Head of caudate nucleus (tissue), 42 donors: ENCODE measurements at regions of chr11 and their contacts with region 1.

Region 1: DNA sequence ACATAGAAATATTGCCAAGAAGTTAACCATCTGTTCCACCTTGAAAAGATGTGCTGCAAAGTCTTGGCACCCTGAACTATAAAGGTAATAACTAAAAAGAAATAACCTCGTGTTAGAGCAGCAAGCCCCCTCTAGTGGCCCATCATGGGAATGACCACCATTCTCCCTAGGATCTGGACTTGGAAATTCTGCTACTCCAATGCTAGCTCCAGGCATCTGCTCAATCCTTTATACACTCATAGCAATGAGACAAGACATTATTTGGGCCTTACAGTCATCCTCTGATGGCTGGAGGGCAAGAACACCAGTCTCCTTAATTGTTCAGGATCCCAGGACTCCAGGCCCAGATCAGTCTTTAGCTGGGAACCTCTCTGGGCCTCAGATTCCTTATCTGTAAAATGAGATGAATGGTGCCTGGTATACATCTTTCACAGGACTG is 76.0 kb downstream of the CWC15 start:
- DNase-seq: peak; percentile 17 to 84 (median 66)

Region 2: GRCh38 chr11:94638902-94639373 is 258.4 kb before region 1 on chr11:
- intact Hi-C with region 1: no loop called
- DNase-seq: peak in 5 of 42 donors; percentile 2 to 38 (median 8)

Region 3: GRCh38 chr11:94786264-94787126 is 110.9 kb before region 1 on chr11:
- intact Hi-C with region 1: loop called (anchors 10 kb)
- DNase-seq: peak in 2 of 42 donors; percentile 27 to 43

Region 4: DNA sequence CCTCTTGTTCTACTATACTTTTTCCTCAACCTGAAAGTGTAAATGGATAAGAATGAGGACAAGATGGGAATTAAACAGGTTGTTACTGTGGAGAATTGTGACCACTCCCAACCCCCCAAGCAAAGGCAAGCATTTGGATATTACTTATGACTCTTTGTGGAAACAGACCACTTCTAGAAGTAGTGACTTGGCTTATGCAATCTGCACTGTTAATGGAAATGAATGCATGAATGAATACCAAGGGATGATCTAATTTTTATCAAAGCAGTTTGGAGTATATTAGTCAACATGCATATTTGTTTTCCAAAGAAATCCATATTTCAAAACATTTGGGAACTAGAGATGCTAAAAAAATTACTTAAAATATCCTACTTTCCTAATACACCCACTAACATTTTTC is 93.9 kb before region 1 on chr11:
- intact Hi-C with region 1: no loop called
- DNase-seq: no peak

Region 5: GRCh38 chr11:94815705-94816344 is 81.5 kb before region 1 on chr11:
- intact Hi-C with region 1: no loop called
- DNase-seq: no peak